Right cardiac atrium (tissue), 5 donors: ENCODE measurements at regions of chr15 and their contacts with region 1.

Region 1: GRCh38 chr15:26260517-26261133 is 397.5 kb upstream of the ATP10A start:
- DNase-seq: peak; percentile 30 to 61 (median 55)
- ATAC-seq: peak in 1 of 2 donors; percentile 34
- H3K4me3 ChIP-seq: no peak overlapping the region
- H3K27ac ChIP-seq: peak overlapping the region; percentile 90
- H3K4me1 ChIP-seq: no peaks in the 10 kb centered on the region
- H3K27me3 ChIP-seq: no peaks in the 10 kb centered on the region

Region 2: GRCh38 chr15:25508369-25509002 is 752.1 kb before region 1 on chr15:
- intact Hi-C with region 1: loop called in 1 of 4 experiments (anchors 10 kb)
- DNase-seq: no peak
- ATAC-seq: peak in 1 of 2 donors; percentile 37
- H3K4me3 ChIP-seq: no peak overlapping the region
- H3K27ac ChIP-seq: no peak overlapping the region
- H3K4me1 ChIP-seq: no peaks in the 10 kb centered on the region
- H3K27me3 ChIP-seq: no peaks in the 10 kb centered on the region

Region 3: DNA sequence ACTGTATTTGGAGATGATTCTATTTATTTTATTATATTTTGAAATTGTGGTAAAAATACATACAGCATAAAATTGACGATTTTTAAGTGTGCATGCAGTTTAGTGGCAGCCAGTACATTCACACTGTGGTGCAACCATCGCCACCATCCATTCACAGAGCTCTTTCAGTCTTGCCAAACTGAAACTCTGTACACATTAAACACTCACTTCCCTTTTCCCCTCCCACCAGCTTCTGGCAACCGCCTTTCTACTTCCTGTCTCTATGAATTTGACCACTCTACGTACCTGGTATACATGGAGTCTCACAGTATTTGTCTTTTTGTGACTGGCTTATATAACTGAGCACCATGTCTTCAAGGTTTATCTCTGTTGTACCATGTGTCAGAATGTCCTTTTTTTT is 94.2 kb before region 1 on chr15:
- intact Hi-C with region 1: no loop called
- DNase-seq: no peak
- ATAC-seq: no peak
- H3K4me3 ChIP-seq: no peak overlapping the region
- H3K27ac ChIP-seq: no peak overlapping the region
- H3K4me1 ChIP-seq: no peaks in the 10 kb centered on the region
- H3K27me3 ChIP-seq: no peaks in the 10 kb centered on the region

Region 4: DNA sequence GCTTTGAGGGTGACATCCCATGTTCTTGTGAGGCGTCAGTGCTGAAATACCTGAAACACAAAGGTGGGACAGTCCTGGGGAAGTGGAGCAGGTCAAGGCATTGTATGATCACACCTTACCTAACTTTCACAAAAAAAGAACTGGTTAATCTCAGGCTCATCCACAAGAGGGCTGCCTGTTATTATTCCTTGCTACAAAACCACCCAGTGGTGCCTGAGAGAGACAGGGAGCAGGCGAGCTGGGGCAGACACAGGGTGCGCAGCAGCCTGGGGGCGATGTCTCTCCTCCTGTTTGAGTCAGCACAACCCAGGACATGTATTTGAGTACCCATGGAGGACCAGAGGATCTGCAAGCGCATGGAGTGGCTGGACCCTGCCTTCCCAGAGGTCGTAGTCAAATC is 80.7 kb before region 1 on chr15:
- intact Hi-C with region 1: loop called in 1 of 4 experiments (anchors 5 kb)
- DNase-seq: peak in 2 of 3 donors; percentile 48 to 60
- ATAC-seq: peak; percentile 77 to 89
- H3K4me3 ChIP-seq: no peak overlapping the region
- H3K27ac ChIP-seq: no peak overlapping the region
- H3K4me1 ChIP-seq: no peaks in the 10 kb centered on the region
- H3K27me3 ChIP-seq: no peaks in the 10 kb centered on the region

Region 5: GRCh38 chr15:26311710-26312236 is 51.1 kb after region 1 on chr15:
- intact Hi-C with region 1: loop called in 1 of 4 experiments (anchors 10 kb)
- DNase-seq: no peak
- ATAC-seq: peak in 1 of 2 donors; percentile 29
- H3K4me3 ChIP-seq: no peak overlapping the region
- H3K27ac ChIP-seq: no peak overlapping the region
- H3K4me1 ChIP-seq: no peaks in the 10 kb centered on the region
- H3K27me3 ChIP-seq: no peaks in the 10 kb centered on the region

Region 6: DNA sequence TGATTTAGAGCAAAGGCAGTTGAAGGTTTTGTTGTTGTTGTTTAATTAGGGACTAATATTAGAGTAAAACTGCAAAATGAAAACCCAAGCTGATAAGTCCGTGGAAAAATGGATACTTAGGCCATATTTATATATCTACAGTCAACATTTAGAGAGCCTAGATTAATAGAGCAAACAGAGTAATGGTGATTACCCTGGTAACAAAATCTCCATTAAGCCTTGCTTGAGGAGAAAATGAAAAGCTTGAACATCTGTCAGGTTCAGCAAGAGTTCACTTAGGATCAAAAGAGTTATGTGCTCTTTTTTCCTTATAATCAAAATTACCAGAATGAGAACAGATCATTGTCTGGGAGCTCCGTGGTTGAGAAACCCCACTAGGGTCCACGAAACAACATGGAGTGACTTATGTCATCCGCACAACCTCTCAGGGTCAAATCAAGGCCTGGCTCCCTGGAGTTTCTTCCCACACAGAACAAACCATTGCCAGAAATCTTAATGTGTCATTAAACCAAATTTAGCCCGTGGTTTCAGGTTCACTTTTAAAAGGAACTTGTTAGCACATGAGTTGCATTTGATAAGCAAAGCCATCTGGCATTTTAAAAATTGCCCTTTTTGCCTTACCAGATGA is 131.1 kb after region 1 on chr15:
- intact Hi-C with region 1: no loop called
- DNase-seq: no peak
- ATAC-seq: no peak
- H3K4me3 ChIP-seq: no peak overlapping the region
- H3K27ac ChIP-seq: no peak overlapping the region
- H3K4me1 ChIP-seq: no peaks in the 10 kb centered on the region
- H3K27me3 ChIP-seq: no peaks in the 10 kb centered on the region

Region 7: GRCh38 chr15:26449291-26449690 is 188.7 kb after region 1 on chr15:
- intact Hi-C with region 1: loop called in 1 of 4 experiments (anchors 10 kb)
- DNase-seq: no peak
- ATAC-seq: no peak
- H3K4me3 ChIP-seq: no peak overlapping the region
- H3K27ac ChIP-seq: no peak overlapping the region
- H3K4me1 ChIP-seq: no peaks in the 10 kb centered on the region
- H3K27me3 ChIP-seq: no peaks in the 10 kb centered on the region

Region 8: GRCh38 chr15:26551473-26551872 is 290.8 kb after region 1 on chr15:
- intact Hi-C with region 1: loop called in 1 of 4 experiments (anchors 10 kb)
- DNase-seq: no peak
- ATAC-seq: peak in 1 of 2 donors; percentile 14
- H3K4me3 ChIP-seq: no peak overlapping the region
- H3K27ac ChIP-seq: no peak overlapping the region
- H3K4me1 ChIP-seq: no peaks in the 10 kb centered on the region
- H3K27me3 ChIP-seq: no peaks in the 10 kb centered on the region